Aorta (tissue), 5 donors: ENCODE measurements at regions of chr6 and their contacts with region 1.

Region 1: GRCh38 chr6:30935018-30935417 is 3.0 kb upstream of the SFTA2 start:
- DNase-seq: no peak
- ATAC-seq: no peak
- H3K4me3 ChIP-seq: no peak overlapping the region
- H3K27ac ChIP-seq: no peak overlapping the region
- H3K4me1 ChIP-seq: no peaks in the 10 kb centered on the region
- H3K27me3 ChIP-seq: no peaks in the 10 kb centered on the region

Region 2: GRCh38 chr6:30870546-30870945 is 64.5 kb before region 1 on chr6:
- intact Hi-C with region 1: no loop called
- DNase-seq: no peak
- ATAC-seq: no peak
- H3K4me3 ChIP-seq: no peak overlapping the region
- H3K27ac ChIP-seq: no peak overlapping the region
- H3K4me1 ChIP-seq: no peaks in the 10 kb centered on the region
- H3K27me3 ChIP-seq: no peaks in the 10 kb centered on the region

Region 3: DNA sequence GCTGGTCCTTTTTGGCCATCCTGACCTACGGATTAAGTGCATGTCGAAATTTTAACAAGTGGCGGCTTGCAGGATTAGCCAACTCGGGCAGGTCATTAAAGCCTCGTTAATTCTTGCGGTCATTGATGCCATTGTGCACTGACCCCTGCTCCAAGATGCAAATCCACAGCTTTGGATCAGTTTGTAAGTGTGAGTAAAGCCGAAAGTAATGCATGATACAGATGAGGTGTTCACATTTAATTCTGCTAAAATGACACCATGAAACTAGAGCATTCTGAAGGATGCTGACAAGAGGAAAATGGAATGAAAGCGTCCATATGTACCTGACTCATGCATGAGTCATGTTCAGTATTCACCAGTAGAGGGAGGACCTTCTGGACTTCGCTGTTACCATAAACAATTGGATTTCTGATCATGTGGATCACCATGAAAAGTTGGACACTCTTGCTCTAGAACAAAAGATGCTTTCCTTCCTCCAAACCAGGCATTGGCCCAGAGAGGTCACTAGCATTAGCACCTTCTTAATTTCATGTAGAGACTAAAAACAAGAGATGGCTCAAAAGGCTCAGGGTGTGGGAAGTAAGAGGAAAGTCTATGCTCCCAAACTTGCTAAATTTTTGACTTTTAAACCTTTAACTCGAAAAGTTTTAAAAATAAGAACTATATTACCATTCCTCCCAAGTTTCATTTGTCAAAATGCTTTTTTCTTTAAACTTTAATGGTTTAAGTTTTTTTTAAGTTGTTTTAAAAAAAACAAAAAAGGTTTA is 123.3 kb after region 1 on chr6:
- intact Hi-C with region 1: loop called in 1 of 2 experiments (anchors 5 kb)
- DNase-seq: no peak
- ATAC-seq: no peak
- H3K4me3 ChIP-seq: no peak overlapping the region
- H3K27ac ChIP-seq: no peak overlapping the region
- H3K4me1 ChIP-seq: no peaks in the 10 kb centered on the region
- H3K27me3 ChIP-seq: no peaks in the 10 kb centered on the region